ENCODE measurements at regions of chr15 and their contacts with region 1.

Region 1: GRCh38 chr15:37134699-37135131 is 34.4 kb upstream of the MEIS2 start:
- DNase-seq: no peak
- ATAC-seq: peak; percentile 85
- H3K4me3 ChIP-seq: no peak overlapping the region
- H3K27ac ChIP-seq: no peak overlapping the region
- H3K4me1 ChIP-seq: no peaks in the 10 kb centered on the region
- H3K27me3 ChIP-seq: no peaks in the 10 kb centered on the region

Region 2: DNA sequence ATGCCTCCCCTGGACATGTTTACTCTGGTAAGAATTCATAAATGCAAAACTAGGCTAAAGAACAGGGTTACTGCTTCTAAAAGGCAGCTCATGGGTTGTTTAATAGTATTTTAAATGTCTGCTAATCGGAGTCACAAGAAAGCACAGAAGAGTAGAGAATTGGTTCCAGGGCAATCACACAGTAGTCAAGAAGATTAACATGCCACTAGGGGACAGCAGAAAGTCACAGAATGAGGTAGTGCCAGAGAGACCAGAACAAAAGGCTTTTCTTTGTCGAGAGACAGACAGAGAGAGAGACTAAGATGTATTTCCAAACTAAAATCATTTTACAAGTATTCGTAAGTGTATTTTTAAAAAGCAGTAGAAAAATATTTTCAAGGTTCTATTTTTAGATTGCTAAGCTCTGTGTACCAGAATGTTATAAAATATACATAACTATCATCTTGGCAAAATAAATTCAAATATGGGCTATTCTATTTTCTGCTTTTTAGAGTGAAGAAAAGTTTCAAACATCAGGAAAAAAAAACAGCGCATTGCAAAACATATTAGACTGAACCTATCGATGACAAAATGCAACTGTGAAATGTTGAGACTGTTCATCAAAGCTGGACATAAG is 633.5 kb before region 1 on chr15:
- intact Hi-C with region 1: loop called (anchors 5 to 10 kb)
- DNase-seq: no peak
- ATAC-seq: peak; percentile 74
- H3K4me3 ChIP-seq: no peak overlapping the region
- H3K27ac ChIP-seq: peak overlapping the region in 1 of 2 donors; percentile 43
- H3K4me1 ChIP-seq: no peaks in the 10 kb centered on the region
- H3K27me3 ChIP-seq: no peaks in the 10 kb centered on the region

Region 3: DNA sequence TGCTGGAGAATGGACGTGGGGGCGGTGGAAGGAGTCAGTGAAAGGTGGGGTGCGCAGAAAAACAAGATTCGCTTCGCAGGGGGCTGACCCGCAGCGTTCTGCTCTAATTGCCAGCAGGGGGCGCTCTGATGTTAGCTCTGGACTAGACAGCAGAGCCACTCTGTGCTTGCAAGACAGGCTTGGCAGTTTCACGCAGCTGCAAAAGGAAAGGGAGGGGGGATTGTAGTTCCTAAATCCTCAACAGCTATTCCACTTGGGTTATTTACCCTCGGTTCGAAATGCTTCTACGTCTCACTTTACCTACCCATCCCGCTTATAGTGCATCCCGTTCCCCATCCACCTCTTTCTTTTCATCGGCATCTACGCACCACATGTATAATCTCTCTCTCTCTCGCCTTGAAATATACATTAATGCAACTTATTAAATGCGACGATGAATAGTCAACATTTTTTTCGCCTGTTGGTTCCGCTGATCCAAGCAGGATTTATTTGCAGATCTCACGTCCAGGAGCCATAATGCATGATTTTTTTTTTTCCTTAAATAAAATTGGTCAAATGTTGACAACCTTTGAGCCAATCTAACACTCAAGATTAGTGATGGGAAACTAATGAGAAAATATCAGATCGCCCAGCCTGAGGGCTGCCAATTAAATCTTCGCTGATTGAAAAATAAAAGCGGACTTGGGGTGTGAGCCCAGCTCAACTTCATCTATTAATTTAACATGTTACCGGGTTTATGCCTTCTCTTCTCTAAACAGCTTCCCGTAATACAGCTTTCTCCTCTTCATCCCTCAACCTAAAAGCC is 250.8 kb before region 1 on chr15:
- intact Hi-C with region 1: loop called (anchors 2 kb)
- DNase-seq: peak; percentile 90 to 94
- ATAC-seq: peak; percentile 90
- H3K4me3 ChIP-seq: peak overlapping the region; percentile 44 to 51
- H3K27ac ChIP-seq: no peak overlapping the region
- H3K4me1 ChIP-seq: no peaks in the 10 kb centered on the region
- H3K27me3 ChIP-seq: no peaks in the 10 kb centered on the region

Measured in aorta (tissue), 5 donors.